AG04449 (cell line): ENCODE measurements at regions of chr5 and their contacts with region 1.

Region 1: GRCh38 chr5:142685418-142686209 is at the start of gene FGF1:
- DNase-seq: no peak
- H3K4me3 ChIP-seq: no peak within 1 kb of the TSS
- CTCF ChIP-seq: no peak

Region 2: DNA sequence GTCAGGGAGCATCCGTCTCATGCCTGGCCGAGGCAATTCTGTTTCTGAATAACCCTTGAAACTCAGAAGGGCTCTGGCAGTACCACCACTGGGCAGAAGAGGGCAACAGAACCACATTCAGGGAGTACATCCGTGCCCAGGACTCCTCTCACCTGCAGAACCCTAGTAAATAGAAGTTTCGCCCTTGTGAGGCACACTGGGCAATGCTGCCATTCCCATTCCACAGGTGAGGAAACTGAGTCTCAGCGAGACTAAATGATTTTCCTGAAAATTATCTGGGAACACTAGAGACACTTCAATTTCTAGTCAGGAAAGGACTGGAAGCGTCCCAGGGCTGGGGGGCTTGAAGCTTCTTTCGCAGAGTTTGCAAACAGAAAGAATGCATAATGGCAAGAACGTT is 74.5 kb before region 1 on chr5:
- CTCF ChIA-PET with region 1: interaction called, 533 read pairs
- POLR2A ChIA-PET with region 1: no interaction called
- DNase-seq: no peak
- H3K4me3 ChIP-seq: no peak overlapping the region
- CTCF ChIP-seq: peak; percentile 94